PC-9 (cell line): ENCODE measurements at regions of chr10 and their contacts with region 1.

Region 1: DNA sequence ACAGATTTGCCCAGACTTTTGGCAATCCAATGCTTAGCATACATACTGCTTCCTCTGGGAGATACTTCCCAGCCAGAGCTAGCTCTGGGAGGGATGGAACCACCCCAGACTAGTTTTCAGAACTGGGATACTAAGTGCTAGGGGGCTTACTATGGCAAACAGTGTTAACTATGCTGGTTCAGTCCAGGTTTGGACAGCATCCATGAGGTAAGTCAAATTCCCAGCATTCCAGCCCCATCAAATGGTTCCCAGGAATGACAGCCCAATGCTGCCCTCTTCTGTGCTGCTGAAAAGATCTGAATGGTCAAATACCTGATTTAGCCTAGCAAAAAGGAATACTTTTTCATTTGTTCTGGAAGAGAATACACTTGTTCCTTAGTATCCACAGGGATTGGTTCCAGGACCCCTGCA is 141.7 kb upstream of the CCDC6 start:
- DNase-seq: peak; percentile 51
- H3K4me3 ChIP-seq: no peak overlapping the region
- H3K27ac ChIP-seq: no peak overlapping the region
- H3K4me1 ChIP-seq: no peaks in the 10 kb centered on the region
- H3K27me3 ChIP-seq: no peaks in the 10 kb centered on the region
- CTCF ChIP-seq: peak; percentile 78

Region 2: GRCh38 chr10:58781873-58782488 is 1266.1 kb before region 1 on chr10:
- CTCF ChIA-PET with region 1: no interaction called
- POLR2A ChIA-PET with region 1: no interaction called
- intact Hi-C with region 1: loop called (anchors 10 kb)
- DNase-seq: peak in 1 of 2 experiments; percentile 4
- H3K4me3 ChIP-seq: no peak overlapping the region
- H3K27ac ChIP-seq: no peak overlapping the region
- H3K4me1 ChIP-seq: no peaks in the 10 kb centered on the region
- H3K27me3 ChIP-seq: no peaks in the 10 kb centered on the region
- CTCF ChIP-seq: peak; percentile 84

Region 3: GRCh38 chr10:59234816-59235429 is 813.2 kb before region 1 on chr10:
- CTCF ChIA-PET with region 1: no interaction called
- POLR2A ChIA-PET with region 1: no interaction called
- intact Hi-C with region 1: loop called (anchors 10 kb)
- DNase-seq: peak in 1 of 2 experiments; percentile 1
- H3K4me3 ChIP-seq: no peak overlapping the region
- H3K27ac ChIP-seq: no peak overlapping the region
- H3K4me1 ChIP-seq: no peaks in the 10 kb centered on the region
- H3K27me3 ChIP-seq: no peaks in the 10 kb centered on the region
- CTCF ChIP-seq: peak; percentile 62

Region 4: DNA sequence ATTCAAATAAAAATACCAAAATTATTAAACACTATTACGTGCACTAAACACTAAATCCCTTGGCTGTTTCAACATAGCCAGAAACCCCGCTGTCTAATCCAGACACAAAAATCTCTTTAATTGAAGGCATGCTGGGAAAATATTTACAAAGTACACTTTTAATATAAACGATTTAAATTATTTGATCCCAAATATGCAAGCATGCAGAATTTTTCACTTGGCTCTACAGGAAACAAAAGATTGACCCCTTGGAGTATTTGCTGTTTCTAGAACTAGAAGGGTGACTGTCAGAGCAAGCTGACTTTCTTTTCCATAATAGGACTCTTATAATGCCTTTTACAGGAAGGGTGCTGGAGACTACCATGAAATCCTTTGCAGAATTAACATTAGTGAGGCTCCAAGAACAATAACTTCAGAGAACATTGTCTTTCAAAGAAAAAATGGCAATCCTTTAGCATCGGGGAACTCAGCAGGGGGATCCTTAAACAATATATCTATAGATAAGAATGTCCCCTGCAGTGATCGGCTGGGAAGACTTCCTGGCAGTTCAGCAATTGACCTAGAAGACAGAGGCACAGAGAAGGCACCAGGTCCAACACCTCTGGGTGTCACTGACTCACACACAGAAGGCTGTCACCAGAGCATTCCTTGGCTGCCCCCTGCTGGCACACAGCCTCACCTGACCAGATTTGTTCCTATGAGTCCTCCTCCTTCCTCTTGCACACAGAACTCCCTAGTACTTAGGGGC is 239.0 kb before region 1 on chr10:
- CTCF ChIA-PET with region 1: interaction called, 5 read pairs
- POLR2A ChIA-PET with region 1: no interaction called
- intact Hi-C with region 1: loop called (anchors 2 kb)
- DNase-seq: peak; percentile 63 to 66
- H3K4me3 ChIP-seq: no peak overlapping the region
- H3K27ac ChIP-seq: no peak overlapping the region
- H3K4me1 ChIP-seq: no peaks in the 10 kb centered on the region
- H3K27me3 ChIP-seq: no peaks in the 10 kb centered on the region
- CTCF ChIP-seq: peak; percentile 85

Region 5: DNA sequence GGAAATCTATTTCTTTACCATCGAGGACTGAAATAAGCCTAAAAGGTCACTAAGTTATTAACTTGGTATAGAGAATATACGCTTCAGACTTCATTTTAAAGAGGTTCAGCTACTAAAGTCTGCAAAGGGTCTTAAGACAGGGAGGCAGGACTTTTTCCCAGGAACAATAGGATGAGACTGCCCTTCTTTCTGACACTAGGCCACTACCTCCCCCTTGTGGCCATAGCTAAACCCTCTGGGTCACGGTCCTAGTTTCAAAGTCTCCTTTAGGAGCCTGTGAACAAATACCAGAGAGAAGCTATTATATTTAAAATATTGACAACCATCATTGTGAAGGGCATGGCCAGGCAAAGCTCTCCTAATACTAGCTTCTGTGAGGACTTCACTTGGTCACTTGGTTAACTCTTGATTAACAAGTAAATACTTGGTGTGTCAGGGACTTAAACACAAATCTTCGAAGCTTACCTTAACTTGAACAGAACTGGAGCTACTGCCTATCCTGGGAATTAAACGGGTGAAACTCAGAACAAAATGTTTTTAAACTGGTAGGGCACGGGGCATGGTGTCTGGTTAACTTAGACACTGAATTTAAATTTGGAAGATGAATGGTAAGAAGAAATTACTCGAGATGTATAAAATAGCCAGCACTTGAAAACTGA is 217.4 kb before region 1 on chr10:
- CTCF ChIA-PET with region 1: no interaction called
- POLR2A ChIA-PET with region 1: interaction called, 4 read pairs
- intact Hi-C with region 1: loop called (anchors 1 kb)
- DNase-seq: peak in 1 of 2 experiments; percentile 29
- H3K4me3 ChIP-seq: no peak overlapping the region
- H3K27ac ChIP-seq: no peak overlapping the region
- H3K4me1 ChIP-seq: no peaks in the 10 kb centered on the region
- H3K27me3 ChIP-seq: no peaks in the 10 kb centered on the region
- CTCF ChIP-seq: peak; percentile 88

Region 6: GRCh38 chr10:59865101-59865500 is 183.0 kb before region 1 on chr10:
- CTCF ChIA-PET with region 1: no interaction called
- POLR2A ChIA-PET with region 1: no interaction called
- intact Hi-C with region 1: loop called (anchors 1 kb)
- DNase-seq: peak; percentile 79 to 94
- H3K4me3 ChIP-seq: no peak overlapping the region
- H3K27ac ChIP-seq: peak overlapping the region; percentile 46
- H3K4me1 ChIP-seq: peaks cover 24% of the 10 kb centered on the region
- H3K27me3 ChIP-seq: no peaks in the 10 kb centered on the region
- CTCF ChIP-seq: peak; percentile 57; the same call in 1 of the 2 replicates

Region 7: GRCh38 chr10:60099998-60100747 is 52.1 kb after region 1 on chr10:
- CTCF ChIA-PET with region 1: no interaction called
- POLR2A ChIA-PET with region 1: no interaction called
- intact Hi-C with region 1: no loop called
- DNase-seq: peak; percentile 15 to 59
- H3K4me3 ChIP-seq: no peak overlapping the region
- H3K27ac ChIP-seq: no peak overlapping the region
- H3K4me1 ChIP-seq: no peaks in the 10 kb centered on the region; the same call in 1 of the 2 replicates
- H3K27me3 ChIP-seq: no peaks in the 10 kb centered on the region
- CTCF ChIP-seq: peak; percentile 86